Dorsolateral prefrontal cortex (tissue), 120 donors: ENCODE measurements at regions of chr11 and their contacts with region 1.

Region 1: GRCh38 chr11:121459413-121460017 is 6.7 kb upstream of the SORL1-AS1 start:
- DNase-seq: no peak
- H3K4me3 ChIP-seq: peak overlapping the region in 2 of 59 donors; percentile 1 to 5
- H3K27ac ChIP-seq: peak overlapping the region in 45 of 59 donors; percentile 0 to 94 (median 50)
- H3K27me3 ChIP-seq: no peaks in the 10 kb centered on the region
- CTCF ChIP-seq: no peak

Region 2: DNA sequence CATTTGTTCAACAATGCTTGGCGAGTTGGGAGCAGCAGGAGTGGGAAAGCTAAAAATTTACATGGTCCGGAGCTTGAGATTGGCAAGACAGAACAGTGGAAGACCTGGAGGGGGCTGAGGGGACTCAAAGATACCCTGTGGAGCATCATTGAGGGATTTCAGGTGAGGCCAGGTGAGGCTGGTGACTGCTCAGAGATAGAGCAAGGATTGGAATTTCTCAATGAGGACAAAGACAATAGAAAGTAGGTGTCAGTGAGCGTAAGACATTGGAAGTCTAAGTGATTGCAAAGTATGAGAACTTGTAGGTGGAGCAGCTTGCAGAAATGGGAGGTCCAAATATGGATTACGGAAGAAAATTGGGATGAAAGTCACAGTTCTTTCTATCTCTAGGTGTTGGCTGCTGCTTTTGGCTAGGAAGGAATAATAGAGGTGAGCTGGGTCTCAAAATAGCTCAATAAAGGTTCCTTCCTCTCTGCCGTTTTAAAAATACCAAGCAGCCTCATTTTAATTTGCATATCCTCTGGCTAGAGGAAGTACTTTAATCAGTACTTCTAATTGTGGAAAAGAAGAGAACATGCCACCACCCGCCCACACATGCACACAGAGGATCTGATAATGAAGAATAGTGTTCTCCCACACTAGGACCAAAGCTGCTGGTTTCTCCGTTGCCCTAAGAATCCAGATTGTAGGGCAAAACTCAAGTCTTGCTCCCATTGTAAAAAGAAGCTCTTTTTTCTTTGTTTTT is 35.0 kb after region 1 on chr11:
- intact Hi-C with region 1: no loop called
- DNase-seq: peak in 4 of 10 donors; percentile 52 to 85 (median 71)
- H3K4me3 ChIP-seq: no peak overlapping the region
- H3K27ac ChIP-seq: peak overlapping the region in 40 of 59 donors; percentile 4 to 75 (median 42)
- H3K27me3 ChIP-seq: no peaks in the 10 kb centered on the region
- CTCF ChIP-seq: no peak

Region 3: DNA sequence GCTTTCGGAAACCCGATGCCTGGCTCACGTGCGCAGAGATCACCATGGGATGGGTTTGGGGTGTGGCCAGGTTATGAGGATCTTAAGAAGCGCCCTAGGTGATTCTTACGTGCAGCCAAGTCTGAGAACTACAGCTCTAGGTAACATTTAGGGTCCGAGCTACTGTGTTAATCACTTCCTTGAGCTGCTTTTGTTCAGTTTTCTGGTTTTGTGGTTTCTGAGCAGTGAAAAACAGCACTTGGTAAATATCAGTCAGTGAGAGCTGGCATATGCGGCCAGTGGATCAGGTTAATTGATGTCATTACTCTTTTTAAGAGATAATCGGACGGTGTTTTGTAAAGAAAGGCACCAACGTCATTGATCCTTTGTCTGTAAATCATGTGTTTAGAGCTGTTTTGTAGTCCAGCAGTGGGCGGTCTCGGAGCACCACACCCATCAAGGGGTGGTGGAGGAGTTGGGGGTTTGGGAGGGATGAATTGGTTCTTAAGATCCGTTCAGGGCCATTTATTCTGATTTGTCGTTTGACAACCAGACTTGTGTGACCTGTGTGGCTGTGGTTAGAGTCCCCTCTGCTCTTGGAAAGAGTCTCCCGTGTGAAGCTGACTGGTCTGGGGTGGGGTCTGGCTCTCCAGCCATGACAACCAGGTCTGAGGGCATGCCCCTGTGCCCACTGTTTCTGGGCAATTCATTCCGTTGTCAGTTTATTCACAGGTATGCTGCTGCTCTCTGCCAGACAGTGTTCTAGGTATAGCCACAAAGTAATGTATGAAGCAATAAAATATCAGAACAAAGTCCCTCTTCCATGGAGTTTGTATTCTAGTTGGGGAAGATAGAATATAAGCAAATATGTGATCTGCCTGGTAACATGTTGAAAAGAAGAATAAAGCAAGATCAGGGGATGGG is 55.2 kb after region 1 on chr11:
- intact Hi-C with region 1: loop called in 1 of 2 experiments (anchors 5 kb)
- DNase-seq: no peak
- H3K4me3 ChIP-seq: no peak overlapping the region
- H3K27ac ChIP-seq: peak overlapping the region in 21 of 59 donors; percentile 2 to 68 (median 35)
- H3K27me3 ChIP-seq: no peaks in the 10 kb centered on the region
- CTCF ChIP-seq: no peak